Activated B cell treated with CpG ODN at 0.5 μM for 24 hours (primary cell): ENCODE measurements at regions of chr13 and their contacts with region 1.

Region 1: DNA sequence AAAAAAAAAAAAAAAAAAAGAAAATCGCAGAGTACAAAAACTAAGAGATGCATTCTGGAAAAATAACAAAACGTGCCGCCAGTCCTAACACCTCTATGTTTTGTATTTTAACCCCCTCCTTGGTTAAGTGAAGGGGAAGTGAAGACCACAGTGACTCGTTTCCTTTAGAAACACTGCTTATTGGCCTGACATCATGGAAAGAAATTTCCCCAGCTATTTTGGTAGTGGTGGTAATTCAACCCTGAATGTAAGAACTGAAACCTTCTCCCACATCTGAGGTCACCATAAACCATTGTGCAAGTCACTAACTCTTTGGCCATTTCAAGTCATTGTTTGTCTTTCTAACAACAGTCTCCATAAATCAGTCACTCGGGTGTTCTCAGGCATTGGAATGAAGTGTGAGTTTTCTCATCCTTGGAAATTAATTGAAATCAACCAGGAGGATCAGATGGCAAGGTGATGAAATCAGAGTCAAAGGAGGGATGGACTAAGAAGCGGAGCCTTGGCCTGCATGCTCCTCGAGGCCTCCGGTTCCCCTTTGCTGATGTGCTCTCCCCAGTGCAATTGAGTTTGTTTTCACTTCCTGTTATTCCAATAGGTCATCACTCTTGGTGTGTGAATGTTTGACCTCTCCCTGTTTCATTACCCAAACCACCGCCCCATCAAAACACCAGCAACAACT is 443.9 kb downstream of the FGF9 start:
- DNase-seq: no peak
- ATAC-seq: peak; percentile 80
- H3K4me3 Mint-ChIP-seq: peak overlapping the region; percentile 77
- H3K27ac Mint-ChIP-seq: peak overlapping the region; percentile 92
- H3K4me1 Mint-ChIP-seq: peaks cover 55% of the 10 kb centered on the region
- H3K27me3 Mint-ChIP-seq: no peaks in the 10 kb centered on the region
- CTCF ChIP-seq: no peak

Region 2: DNA sequence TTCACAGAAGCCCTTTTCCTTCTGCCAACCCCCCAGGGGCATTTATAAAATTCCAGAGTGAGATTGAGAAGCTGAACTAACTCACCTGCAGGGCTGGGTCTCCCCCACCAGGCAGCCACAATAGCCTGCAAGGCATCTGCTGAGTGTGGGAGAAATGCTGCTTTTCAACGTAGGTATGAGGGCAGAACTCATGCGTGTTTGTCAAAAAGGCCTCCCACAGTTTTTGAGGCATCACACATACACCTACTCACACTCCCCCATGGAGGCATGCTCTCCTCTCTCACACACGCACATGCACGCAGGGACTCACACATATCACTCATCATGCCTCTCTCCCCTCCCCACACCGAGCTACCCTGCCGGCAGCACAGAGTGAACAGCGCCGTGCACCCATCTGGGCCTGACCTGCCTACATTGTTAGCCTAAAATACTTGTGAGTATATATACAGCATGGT is 53.4 kb before region 1 on chr13:
- CTCF ChIA-PET with region 1: no interaction called
- POLR2A ChIA-PET with region 1: interaction called, 3 read pairs
- intact Hi-C with region 1: loop called (anchors 1 kb)
- DNase-seq: peak; percentile 17
- ATAC-seq: peak; percentile 65
- H3K4me3 Mint-ChIP-seq: peak overlapping the region; percentile 51
- H3K27ac Mint-ChIP-seq: peak overlapping the region; percentile 86
- H3K4me1 Mint-ChIP-seq: peaks cover 46% of the 10 kb centered on the region
- H3K27me3 Mint-ChIP-seq: no peaks in the 10 kb centered on the region
- CTCF ChIP-seq: no peak

Region 3: GRCh38 chr13:22126433-22127021 is 11.8 kb after region 1 on chr13:
- CTCF ChIA-PET with region 1: no interaction called
- POLR2A ChIA-PET with region 1: interaction called, 4 read pairs
- intact Hi-C with region 1: loop called (anchors 1 kb)
- DNase-seq: no peak
- ATAC-seq: peak; percentile 97
- H3K4me3 Mint-ChIP-seq: peak overlapping the region; percentile 26
- H3K27ac Mint-ChIP-seq: peak overlapping the region; percentile 68
- H3K4me1 Mint-ChIP-seq: peaks cover 30% of the 10 kb centered on the region
- H3K27me3 Mint-ChIP-seq: no peaks in the 10 kb centered on the region
- CTCF ChIP-seq: no peak

Region 4: GRCh38 chr13:22154046-22154445 is 39.3 kb after region 1 on chr13:
- CTCF ChIA-PET with region 1: no interaction called
- POLR2A ChIA-PET with region 1: no interaction called
- intact Hi-C with region 1: no loop called
- DNase-seq: no peak
- ATAC-seq: no peak
- H3K4me3 Mint-ChIP-seq: no peak overlapping the region
- H3K27ac Mint-ChIP-seq: no peak overlapping the region
- H3K4me1 Mint-ChIP-seq: no peaks in the 10 kb centered on the region
- H3K27me3 Mint-ChIP-seq: no peaks in the 10 kb centered on the region
- CTCF ChIP-seq: no peak

Region 5: DNA sequence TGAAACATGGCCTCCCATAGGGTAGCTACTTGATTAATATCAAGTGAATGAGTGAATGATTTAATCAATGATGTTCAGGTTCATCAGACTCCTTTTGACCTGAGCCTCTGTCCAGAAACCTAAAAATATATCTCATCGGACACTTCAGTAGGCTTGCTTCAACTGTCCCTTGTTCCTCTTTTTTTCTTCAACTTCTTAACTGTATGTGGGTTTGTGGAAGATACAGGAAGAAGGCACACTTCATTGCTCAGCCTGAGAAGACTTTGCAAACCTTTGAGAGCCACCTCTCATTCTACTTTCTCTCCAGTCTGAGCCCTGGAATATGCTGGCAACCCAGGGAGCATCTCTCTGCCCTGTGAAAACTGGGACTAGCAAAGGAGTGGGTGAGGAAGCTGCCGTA is 113.1 kb after region 1 on chr13:
- CTCF ChIA-PET with region 1: no interaction called
- POLR2A ChIA-PET with region 1: no interaction called
- intact Hi-C with region 1: loop called (anchors 1 kb)
- DNase-seq: no peak
- ATAC-seq: no peak
- H3K4me3 Mint-ChIP-seq: no peak overlapping the region
- H3K27ac Mint-ChIP-seq: no peak overlapping the region
- H3K4me1 Mint-ChIP-seq: peaks cover 28% of the 10 kb centered on the region
- H3K27me3 Mint-ChIP-seq: no peaks in the 10 kb centered on the region
- CTCF ChIP-seq: no peak

Region 6: GRCh38 chr13:23384111-23384510 is 1269.3 kb after region 1 on chr13:
- CTCF ChIA-PET with region 1: no interaction called
- POLR2A ChIA-PET with region 1: no interaction called
- intact Hi-C with region 1: loop called (anchors 2 kb)
- DNase-seq: no peak
- ATAC-seq: peak; percentile 98
- H3K4me3 Mint-ChIP-seq: peak overlapping the region; percentile 36
- H3K27ac Mint-ChIP-seq: peak overlapping the region; percentile 87
- H3K4me1 Mint-ChIP-seq: peaks cover 35% of the 10 kb centered on the region
- H3K27me3 Mint-ChIP-seq: no peaks in the 10 kb centered on the region
- CTCF ChIP-seq: no peak